ENCODE measurements at regions of chr19 and their contacts with region 1.

Region 1: GRCh38 chr19:42306646-42307045 is 4.2 kb upstream of the PAFAH1B3 start:
- DNase-seq: no peak
- H3K4me3 ChIP-seq: no peak overlapping the region
- CTCF ChIP-seq: no peak

Region 2: DNA sequence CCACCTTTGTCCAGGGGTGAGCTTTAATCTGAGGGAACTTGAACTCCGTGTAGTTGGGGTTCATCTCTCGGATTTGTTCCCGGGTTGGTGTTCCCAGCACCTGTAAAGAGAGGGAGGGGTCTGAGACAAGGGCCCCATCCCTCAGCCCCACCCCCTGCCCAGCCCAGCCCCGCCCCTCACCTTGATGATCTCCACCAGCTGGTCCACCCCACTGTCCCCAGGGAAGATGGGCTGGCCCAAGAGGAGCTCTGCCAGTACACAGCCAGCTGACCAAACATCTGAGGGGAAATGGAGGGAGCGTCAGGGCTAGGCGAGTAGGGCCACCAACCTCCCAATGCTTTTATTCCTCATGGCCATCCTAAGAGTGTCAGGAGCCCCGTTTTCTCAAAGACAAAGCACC is 73.5 kb before region 1 on chr19:
- CTCF ChIA-PET with region 1: no interaction called
- POLR2A ChIA-PET with region 1: no interaction called
- DNase-seq: no peak
- H3K4me3 ChIP-seq: no peak overlapping the region
- CTCF ChIP-seq: no peak

Region 3: GRCh38 chr19:42295831-42296525 is 10.7 kb before region 1 on chr19:
- CTCF ChIA-PET with region 1: interaction called, 22 read pairs
- POLR2A ChIA-PET with region 1: interaction called, 4 read pairs
- DNase-seq: no peak
- H3K4me3 ChIP-seq: no peak overlapping the region
- CTCF ChIP-seq: peak; percentile 98

Measured in AG04449 (cell line).